Heart right ventricle (tissue), 16 donors: ENCODE measurements at regions of chr7 and their contacts with region 1.

Region 1: DNA sequence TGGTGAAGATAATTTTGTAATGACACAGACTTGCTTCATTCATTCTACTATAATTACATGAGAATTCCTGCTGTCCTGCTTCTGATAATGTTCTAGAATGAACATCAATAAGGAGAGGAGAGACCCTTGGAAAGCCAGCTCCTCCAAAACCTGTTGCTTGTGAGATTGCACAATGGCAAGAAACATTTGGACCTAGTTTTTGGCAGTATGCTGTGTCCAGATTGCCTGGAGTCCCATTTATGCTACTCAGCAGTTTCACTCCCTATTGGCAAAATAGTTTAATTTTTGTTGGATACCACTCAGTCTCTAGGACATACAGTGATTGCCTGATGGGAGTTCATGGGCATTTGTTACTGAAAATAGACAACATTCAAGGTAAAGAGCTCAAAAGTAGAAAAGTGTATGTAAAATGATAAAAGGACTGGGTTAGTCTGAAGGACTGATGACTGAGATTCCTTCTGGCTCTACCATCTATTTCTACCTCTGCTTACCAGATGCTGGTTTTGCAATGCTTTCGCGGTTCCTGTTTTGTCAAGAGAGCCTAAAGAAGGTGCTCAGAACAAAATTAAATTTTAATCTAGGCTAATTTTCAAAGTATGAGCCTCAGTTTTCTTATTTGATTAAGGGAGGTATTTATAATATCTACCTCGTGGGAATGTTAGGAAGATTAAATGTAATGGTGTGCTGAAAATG is 8.0 kb upstream of the ACTR3B start:
- DNase-seq: no peak
- ATAC-seq: peak in 1 of 8 donors; percentile 52
- H3K4me3 ChIP-seq: no peak overlapping the region
- H3K27ac ChIP-seq: no peak overlapping the region
- H3K4me1 ChIP-seq: no peaks in the 10 kb centered on the region
- H3K27me3 ChIP-seq: no peaks in the 10 kb centered on the region
- CTCF ChIP-seq: no peak

Region 2: DNA sequence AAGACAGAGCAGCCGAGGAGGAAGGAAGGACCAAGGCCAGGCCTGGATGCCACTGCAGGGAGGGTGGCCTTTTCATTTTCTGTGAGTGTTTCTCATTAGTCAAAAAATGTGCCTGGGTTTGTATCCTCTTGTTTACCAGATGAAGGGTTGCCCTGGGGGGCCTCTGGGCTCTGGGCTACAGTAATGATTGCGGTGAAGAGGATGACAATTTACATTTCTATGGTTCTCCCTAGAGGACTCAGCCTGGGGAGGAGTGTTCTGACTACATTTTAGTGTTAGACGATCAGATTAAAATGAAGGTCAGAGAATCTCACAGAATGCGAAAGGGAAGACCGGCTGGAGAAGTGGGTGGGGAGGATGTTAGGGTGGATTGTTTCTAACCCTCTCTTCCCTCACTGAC is 207.8 kb before region 1 on chr7:
- intact Hi-C with region 1: no loop called
- DNase-seq: no peak
- ATAC-seq: no peak
- H3K4me3 ChIP-seq: no peak overlapping the region
- H3K27ac ChIP-seq: no peak overlapping the region
- H3K4me1 ChIP-seq: no peaks in the 10 kb centered on the region
- H3K27me3 ChIP-seq: peaks cover 0 to 4% (median 0%) of the 10 kb centered on the region in 7 donors
- CTCF ChIP-seq: no peak

Region 3: DNA sequence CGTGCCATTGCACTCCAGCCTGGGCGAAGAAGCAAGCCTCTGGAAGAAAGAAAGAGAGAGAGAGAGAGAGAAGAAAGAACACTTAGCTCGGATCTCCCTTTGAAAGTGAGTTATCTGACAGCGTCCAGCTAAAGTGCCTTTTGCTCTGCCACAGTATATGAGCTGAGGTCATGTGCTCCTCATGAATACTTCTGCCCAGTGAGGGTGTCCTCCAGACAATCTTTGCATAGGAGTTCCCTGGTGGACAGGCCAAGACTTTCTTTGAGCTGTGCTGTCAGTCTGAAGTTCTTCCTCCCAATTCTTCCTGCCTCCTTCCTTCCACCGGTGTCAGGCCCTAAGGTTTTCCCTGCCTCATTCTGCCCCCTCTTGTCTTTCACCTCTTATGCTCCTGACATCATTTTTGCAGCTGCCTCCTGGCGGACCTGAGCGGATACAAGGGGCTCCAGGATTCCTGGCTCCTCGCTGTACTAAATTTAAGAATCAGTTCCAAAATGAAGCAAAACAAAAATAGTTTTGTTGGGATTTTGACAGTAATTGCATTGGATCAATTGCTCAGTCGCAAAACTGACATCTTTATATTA is 107.5 kb before region 1 on chr7:
- intact Hi-C with region 1: no loop called
- DNase-seq: no peak
- ATAC-seq: no peak
- H3K4me3 ChIP-seq: no peak overlapping the region
- H3K27ac ChIP-seq: no peak overlapping the region
- H3K4me1 ChIP-seq: no peaks in the 10 kb centered on the region
- H3K27me3 ChIP-seq: no peaks in the 10 kb centered on the region
- CTCF ChIP-seq: no peak

Region 4: DNA sequence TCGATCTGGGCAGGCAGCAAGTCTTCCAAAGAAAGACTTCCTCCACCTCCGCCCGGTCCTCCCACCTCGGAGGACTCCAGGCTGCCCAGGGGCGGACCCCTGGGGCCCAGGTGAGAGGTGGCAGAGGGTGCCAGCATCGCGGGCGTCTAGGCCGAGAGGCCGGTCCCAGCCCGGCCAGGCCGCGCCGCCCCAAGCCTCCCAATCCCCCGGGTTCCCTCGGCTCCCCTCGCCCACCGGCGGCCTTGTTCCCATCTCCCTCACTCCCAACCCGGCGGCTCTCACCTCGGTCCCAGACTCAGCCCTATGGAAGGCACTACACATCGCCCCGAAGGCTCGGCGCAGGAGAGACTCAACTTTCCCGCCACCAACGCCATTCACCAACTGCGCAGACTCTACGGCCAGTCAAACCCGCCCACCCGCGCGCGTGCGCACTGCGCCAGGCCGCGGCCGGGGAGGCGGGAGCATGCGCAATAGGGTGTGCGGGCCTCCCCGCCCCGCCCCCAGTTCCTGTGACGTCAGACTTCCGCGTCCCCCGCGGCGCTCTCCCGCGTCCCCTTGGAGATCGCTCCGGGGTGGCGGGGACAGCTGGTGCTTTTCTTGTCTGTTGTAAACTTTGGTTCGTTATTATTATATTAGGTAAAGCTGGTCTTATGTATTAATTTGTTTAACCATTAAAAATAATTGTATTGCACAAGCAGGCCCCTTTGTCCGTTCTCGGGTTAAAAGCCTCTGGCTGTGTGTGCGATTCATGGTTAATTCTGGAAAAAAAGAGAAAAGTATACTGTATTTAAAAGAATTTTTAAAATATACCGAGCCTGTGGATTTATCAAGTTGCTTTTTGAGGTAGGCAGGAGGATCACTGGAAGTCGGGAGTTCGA is 75.6 kb before region 1 on chr7 and contains the start of gene XRCC2:
- intact Hi-C with region 1: loop called in 1 of 10 experiments (anchors 5 kb)
- DNase-seq: peak; percentile 91 to 94
- ATAC-seq: peak; percentile 99 to 100 (median 100)
- H3K4me3 ChIP-seq: peak within 1 kb of the TSS; percentile 47 to 83 (median 68)
- H3K27ac ChIP-seq: peak within 1 kb of the TSS; percentile 61 to 91 (median 82)
- H3K4me1 ChIP-seq: peaks cover 3 to 15% (median 11%) of the 10 kb centered on the region in 9 donors
- H3K27me3 ChIP-seq: no peaks in the 10 kb centered on the region
- CTCF ChIP-seq: no peak
- total RNA-seq, gene XRCC2: 0.27 to 0.71 (median 0.50) TPM